Motor neuron (in vitro differentiated cells): ENCODE measurements at regions of chr18 and their contacts with region 1.

Region 1: GRCh38 chr18:11733031-11733430 is 44.0 kb downstream of the GNAL start:
- ATAC-seq: peak; percentile 81 to 99 (median 90)
- H3K4me3 ChIP-seq: no peak overlapping the region
- H3K27ac ChIP-seq: no peak overlapping the region
- H3K4me1 ChIP-seq: peaks cover 2 to 6% of the 10 kb centered on the region in 2 donors

Region 2: GRCh38 chr18:11437046-11437445 is 296.0 kb before region 1 on chr18:
- in situ Hi-C with region 1: no loop called
- ATAC-seq: no peak
- H3K4me3 ChIP-seq: no peak overlapping the region
- H3K27ac ChIP-seq: no peak overlapping the region
- H3K4me1 ChIP-seq: no peaks in the 10 kb centered on the region

Region 3: DNA sequence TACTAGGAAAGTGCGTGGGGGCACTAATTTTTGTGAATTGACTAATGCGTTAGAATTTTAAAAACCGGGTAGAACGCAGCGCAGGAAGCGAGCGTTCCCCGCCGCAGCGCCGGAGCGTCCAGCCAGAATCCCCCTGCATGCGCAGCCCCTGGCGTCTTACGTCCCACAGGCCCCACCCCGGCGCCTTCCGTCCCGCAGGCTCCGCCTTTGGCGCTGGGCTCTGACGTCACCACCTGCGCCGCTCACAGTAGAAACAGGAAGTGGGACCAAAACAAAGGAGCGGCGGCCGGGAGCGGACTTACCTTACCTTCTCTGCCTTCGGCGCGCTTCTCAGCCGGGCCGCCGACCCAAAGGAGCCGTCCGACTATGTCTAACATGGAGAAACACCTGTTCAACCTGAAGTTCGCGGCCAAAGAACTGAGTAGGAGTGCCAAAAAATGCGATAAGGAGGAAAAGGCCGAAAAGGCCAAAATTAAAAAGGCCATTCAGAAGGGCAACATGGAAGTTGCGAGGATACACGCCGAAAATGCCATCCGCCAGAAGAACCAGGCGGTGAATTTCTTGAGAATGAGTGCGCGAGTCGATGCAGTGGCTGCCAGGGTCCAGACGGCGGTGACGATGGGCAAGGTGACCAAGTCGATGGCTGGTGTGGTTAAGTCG is 118.2 kb after region 1 on chr18 and contains the start of gene CHMP1B:
- in situ Hi-C with region 1: loop called in 2 of 9 experiments (anchors 25 kb)
- ATAC-seq: peak; percentile 81 to 99 (median 94)
- H3K4me3 ChIP-seq: peak within 1 kb of the TSS; percentile 84 to 98 (median 92)
- H3K27ac ChIP-seq: peak within 1 kb of the TSS; percentile 79 to 81
- H3K4me1 ChIP-seq: peaks cover 18 to 22% of the 10 kb centered on the region in 2 donors
- total RNA-seq, gene CHMP1B: 27.6 to 57.4 (median 39.1) TPM

Region 4: GRCh38 chr18:12015416-12016062 is 282.5 kb after region 1 on chr18:
- in situ Hi-C with region 1: loop called in 1 of 9 experiments (anchors 25 kb)
- ATAC-seq: peak in 7 of 8 experiments; percentile 23 to 71 (median 47)
- H3K4me3 ChIP-seq: no peak overlapping the region
- H3K27ac ChIP-seq: no peak overlapping the region
- H3K4me1 ChIP-seq: peaks cover 31 to 36% of the 10 kb centered on the region in 2 donors